Activated CD8-positive, alpha-beta T cell treated with anti-CD3 and anti-CD28 coated beads, Interleukin-2, amount 10 ng/mL, durations not matched to agents 7 days and 5 days (primary cell): ENCODE measurements at regions of chr16 and their contacts with region 1.

Region 1: DNA sequence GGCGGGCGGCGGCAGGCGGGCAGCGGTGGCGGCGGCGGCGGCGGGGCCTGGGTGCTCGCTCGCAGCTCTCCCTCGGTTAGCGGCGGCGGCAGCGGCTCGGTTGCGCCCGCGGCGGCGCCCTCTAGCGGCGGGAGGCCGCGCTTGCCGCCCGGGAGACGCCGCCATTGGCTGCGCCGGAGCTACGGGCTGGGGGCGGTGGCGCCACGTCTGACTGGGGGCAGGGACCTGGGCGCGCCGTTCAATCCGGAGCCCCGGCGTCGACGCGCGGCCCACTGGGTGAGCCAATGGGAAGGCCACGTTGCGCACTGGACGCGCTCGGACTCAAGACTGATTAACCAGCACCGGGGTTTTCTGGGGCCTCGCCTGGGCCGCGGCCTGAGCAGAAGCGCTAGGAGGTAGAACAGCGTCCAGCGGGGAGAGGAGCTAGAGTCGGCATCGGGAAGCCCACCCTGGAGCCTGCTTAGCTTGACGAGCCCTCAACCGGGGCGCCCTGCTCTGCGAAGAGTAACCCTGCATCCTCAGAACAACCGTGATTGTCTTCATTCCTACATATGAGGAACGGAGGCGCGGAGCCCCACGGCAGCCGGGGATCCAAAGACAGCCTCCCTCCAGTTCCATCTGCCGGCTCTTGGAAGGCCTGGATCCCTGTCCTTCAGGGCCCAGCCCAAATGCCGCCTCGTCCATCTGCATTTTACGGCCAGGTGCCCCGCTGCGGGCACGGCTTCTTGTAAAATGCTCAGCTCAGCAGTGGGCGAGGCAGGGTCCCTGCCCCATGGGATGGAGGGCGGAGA is at the start of gene ZC3H7A:
- DNase-seq: peak; percentile 95
- ATAC-seq: peak; percentile 99
- H3K4me3 Mint-ChIP-seq: peak within 1 kb of the TSS; percentile 95
- H3K27ac Mint-ChIP-seq: peak within 1 kb of the TSS; percentile 98
- H3K4me1 Mint-ChIP-seq: peaks cover 70% of the 10 kb centered on the region
- H3K27me3 Mint-ChIP-seq: no peaks in the 10 kb centered on the region
- total RNA-seq, gene ZC3H7A: 58.9 TPM

Region 2: DNA sequence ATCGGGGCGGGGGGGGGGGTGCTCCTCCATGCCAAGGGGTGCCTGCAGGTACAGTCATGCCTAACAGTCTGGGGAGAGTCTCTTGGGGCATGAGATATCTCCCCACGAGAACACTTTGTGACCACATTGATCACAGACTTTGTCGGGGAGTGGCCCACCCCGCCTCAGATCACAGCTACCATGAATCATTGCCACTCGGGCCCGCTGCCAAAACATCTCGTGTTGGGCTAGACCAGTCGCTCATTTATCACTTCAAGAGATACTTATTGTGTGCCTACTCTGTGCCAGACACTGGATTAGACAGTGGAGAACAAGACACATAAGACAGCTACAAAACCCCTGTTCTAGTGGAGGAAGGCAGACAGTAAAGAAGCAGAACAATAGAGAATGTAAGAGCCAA is 780.4 kb before region 1 on chr16:
- CTCF ChIA-PET with region 1: no interaction called
- POLR2A ChIA-PET with region 1: no interaction called
- DNase-seq: no peak
- ATAC-seq: no peak
- H3K4me3 Mint-ChIP-seq: no peak overlapping the region
- H3K27ac Mint-ChIP-seq: no peak overlapping the region
- H3K4me1 Mint-ChIP-seq: peaks cover 13% of the 10 kb centered on the region
- H3K27me3 Mint-ChIP-seq: no peaks in the 10 kb centered on the region

Region 3: DNA sequence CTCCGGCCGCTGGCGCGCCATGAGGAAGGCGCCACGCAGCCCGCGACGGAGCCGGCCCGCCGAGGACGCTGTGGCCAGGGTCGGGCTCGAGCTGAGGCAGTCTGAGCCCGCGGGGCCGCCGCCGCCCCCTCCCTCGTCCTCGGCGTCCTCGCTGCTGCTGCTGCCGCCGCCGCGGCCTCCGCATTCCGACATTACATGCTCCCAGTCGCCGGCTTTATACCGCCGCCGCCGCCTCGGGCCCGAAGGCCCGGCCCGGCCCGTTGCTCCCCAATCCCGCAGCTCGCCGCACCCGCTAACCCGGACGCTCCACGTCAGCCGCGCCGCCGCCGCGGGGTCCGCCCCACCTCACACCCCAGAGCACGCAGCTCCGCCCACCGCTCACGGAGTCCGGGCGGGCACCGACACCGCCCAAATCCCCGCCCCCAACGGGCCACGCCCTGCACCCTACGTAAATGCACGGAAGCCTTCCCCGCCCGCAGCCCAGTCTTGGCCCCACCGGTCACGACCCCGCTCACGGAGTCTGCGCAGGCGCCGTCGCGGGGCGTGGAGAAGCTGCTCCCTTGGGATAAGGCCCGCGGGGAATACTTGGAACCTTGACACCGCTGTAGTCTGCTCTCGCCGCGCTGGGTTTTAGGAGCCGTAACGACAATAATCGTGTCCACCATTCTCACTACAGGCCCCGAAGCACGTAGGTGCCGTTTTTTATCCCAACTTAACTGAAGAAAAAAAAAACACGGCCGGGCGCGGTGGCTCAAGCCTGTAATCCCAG is 54.6 kb before region 1 on chr16 and contains the start of gene TXNDC11:
- CTCF ChIA-PET with region 1: interaction called, 31 read pairs
- POLR2A ChIA-PET with region 1: interaction called, 28 read pairs
- DNase-seq: peak; percentile 99
- ATAC-seq: peak; percentile 92
- H3K4me3 Mint-ChIP-seq: peak within 1 kb of the TSS; percentile 87
- H3K27ac Mint-ChIP-seq: peak within 1 kb of the TSS; percentile 94
- H3K4me1 Mint-ChIP-seq: peaks cover 55% of the 10 kb centered on the region
- H3K27me3 Mint-ChIP-seq: no peaks in the 10 kb centered on the region
- total RNA-seq, gene TXNDC11: 30.1 to 34.4 TPM

Region 4: DNA sequence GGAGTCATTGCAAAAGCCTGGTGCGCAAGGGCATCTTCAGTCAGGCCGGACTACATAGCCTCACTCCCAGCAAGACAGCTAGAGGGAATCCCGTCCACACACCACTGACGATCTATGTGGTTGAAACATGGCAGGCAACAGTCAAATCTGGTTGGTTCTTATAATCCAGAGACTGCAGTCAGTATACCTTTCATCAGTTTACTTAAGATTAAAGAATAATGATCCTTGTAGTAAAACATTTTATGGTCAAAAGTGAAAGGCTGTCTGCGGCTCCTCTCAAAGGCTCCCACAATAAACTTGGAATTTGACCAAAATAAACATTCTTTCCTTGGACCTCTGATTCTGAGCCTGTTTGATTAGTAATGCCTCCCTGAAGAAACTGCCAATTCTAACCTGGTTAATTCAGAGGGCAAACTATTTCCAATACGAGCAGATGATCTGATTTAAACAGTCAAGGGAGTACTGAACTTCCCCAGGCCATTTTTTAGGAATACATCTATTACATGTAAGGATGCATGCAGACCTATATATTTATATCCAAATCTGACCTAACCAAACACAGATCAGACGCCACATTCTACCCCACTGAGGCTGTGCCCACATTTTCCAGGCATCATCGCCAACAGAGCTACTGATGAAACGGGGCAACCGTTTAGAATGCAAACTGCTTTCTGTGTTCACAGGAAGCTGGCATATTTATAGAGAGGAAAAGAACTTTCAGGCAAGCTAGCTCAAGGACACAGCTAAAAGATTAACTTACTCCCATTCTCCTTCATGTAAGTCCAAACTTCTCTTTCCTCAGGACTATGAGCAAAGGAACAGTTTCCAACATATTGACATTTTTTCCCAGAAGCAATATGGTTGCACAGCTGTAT is 39.5 kb before region 1 on chr16:
- CTCF ChIA-PET with region 1: interaction called, 18 read pairs
- POLR2A ChIA-PET with region 1: interaction called, 4 read pairs
- DNase-seq: no peak
- ATAC-seq: no peak
- H3K4me3 Mint-ChIP-seq: no peak overlapping the region
- H3K27ac Mint-ChIP-seq: no peak overlapping the region
- H3K4me1 Mint-ChIP-seq: no peaks in the 10 kb centered on the region
- H3K27me3 Mint-ChIP-seq: no peaks in the 10 kb centered on the region

Region 5: DNA sequence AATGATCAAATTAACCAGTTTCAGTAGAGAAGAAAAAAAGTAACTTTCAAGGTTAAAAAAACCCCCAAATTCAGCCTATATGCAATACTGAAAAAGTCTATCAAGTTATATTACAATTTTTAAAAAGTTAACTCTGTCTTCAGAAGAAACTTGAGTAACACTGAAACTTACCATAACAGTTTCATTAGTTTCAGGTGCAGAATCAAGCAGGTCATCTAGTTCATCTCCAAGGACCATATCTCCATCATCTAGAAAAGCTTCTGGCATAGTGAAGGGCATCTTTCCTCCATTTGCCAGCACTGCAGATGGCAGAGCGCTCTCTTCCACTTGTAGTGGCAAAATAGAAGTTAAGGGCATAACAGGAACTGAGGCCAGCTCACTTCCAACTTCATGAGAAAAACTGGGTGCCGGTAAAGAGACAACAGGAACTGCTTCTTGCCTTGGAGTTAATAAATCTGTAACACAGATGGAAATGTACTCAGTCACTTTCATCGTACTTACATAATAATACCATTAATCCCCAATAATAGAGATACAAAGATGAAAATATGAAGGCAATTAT is 23.2 kb before region 1 on chr16:
- CTCF ChIA-PET with region 1: interaction called, 14 read pairs
- POLR2A ChIA-PET with region 1: interaction called, 13 read pairs
- DNase-seq: no peak
- ATAC-seq: no peak
- H3K4me3 Mint-ChIP-seq: no peak overlapping the region
- H3K27ac Mint-ChIP-seq: no peak overlapping the region
- H3K4me1 Mint-ChIP-seq: peaks cover 4% of the 10 kb centered on the region
- H3K27me3 Mint-ChIP-seq: no peaks in the 10 kb centered on the region

Region 6: GRCh38 chr16:11783319-11784037 is 13.9 kb before region 1 on chr16:
- CTCF ChIA-PET with region 1: interaction called, 124 read pairs
- POLR2A ChIA-PET with region 1: interaction called, 149 read pairs
- DNase-seq: peak; percentile 61
- ATAC-seq: peak; percentile 81
- H3K4me3 Mint-ChIP-seq: peak overlapping the region; percentile 65
- H3K27ac Mint-ChIP-seq: peak overlapping the region; percentile 91
- H3K4me1 Mint-ChIP-seq: peaks cover 59% of the 10 kb centered on the region
- H3K27me3 Mint-ChIP-seq: no peaks in the 10 kb centered on the region